ENCODE measurements at regions of chr18 and their contacts with region 1.

Region 1: DNA sequence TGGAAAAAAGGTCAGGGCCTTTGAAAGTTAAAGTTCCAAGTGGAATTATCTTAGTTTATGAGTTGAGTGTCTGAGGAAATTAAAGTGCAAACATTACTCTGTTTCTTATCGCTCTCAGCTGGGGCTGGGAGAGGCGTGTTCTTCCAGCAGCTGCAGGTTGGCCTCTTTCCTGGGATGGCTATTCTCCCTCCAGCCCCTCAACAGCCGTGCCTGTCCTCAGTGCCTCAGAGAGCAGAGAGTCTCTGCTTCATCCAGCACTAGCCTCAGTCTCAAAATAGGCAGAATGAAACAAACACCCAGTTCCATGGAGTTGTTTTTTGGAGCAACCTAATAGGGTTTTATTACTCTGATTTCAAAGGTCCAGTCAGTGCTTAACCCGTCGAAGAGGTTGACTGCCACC is 298.1 kb downstream of the GALR1 start:
- DNase-seq: no peak
- ATAC-seq: peak; percentile 67

Region 2: GRCh38 chr18:75691483-75691882 is 1856.3 kb before region 1 on chr18:
- intact Hi-C with region 1: loop called (anchors 5 kb)
- DNase-seq: no peak
- ATAC-seq: no peak

Region 3: DNA sequence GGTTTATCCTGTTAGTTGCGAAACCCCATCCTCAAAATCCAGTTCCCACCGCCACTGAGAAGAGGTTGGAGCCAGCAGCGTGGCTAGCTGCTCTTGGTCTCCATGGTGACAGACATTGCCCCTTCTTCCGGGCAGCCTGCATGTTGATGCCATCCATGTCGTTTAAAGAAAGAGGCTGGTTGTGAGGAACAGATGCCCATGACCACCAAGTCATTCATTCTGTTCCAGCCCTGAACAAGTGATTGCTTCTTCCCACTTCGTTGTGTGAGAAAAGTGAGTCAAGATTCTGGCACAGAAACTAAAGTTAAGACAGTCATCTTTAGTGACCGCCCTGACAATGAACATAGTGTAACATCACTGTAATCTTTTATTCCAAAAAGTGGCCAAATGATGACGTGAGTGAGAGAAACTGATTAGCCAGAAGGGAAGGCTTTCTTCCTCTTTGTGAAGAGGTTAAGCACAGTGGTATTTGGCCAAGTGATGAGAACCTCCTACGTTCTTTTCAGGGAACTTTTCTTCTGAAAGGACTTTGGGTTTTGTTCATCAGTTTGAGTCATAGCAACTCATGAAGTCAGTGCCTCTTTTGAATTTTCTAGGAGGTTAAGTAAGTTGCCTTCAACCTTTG is 25.6 kb before region 1 on chr18:
- intact Hi-C with region 1: loop called (anchors 2 kb)
- DNase-seq: no peak
- ATAC-seq: no peak

Measured in sciatic nerve (tissue), 2 donors.